HepG2 (cell line): ENCODE measurements at regions of chr4 and their contacts with region 1.

Region 1: DNA sequence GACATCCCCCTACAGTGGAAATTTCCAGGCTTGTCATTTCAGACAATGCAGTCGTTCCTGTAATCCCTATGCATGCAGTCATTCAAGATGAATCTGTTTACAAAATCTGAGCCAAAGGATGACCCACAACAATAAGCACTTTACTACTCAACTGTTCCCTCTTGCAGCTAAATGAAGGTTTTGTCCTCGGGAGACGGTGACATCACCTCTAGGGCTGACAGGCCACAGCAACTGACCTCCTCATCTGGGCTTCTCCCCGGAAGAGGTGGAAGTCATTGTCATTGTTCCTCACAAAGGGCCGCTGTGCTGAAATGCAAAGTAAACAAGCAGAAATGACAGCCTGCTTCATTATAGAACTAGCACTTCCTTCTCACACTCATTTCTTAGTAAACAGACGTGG is 29.2 kb downstream of the CLRN2 start:
- DNase-seq: peak; percentile 98
- ATAC-seq: peak; percentile 97
- H3K4me3 ChIP-seq: no peak overlapping the region
- H3K27ac ChIP-seq: peak overlapping the region; percentile 78
- H3K4me1 ChIP-seq: peaks cover 51% of the 10 kb centered on the region
- H3K27me3 ChIP-seq: no peaks in the 10 kb centered on the region
- CTCF ChIP-seq: no peak
- EP300 ChIP-seq: peak in 1 of 2 experiments; percentile 93; a peak in 2 of 4 replicates
- POLR2A ChIP-seq: no peak
- RAD21 ChIP-seq: no peak

Region 2: GRCh38 chr4:17511950-17512795 is 32.0 kb before region 1 on chr4 and contains the start of gene QDPR:
- CTCF ChIA-PET with region 1: no interaction called
- POLR2A ChIA-PET with region 1: interaction called, 9 read pairs
- in situ Hi-C with region 1: no loop called
- intact Hi-C with region 1: loop called (anchors 2 kb)
- DNase-seq: peak; percentile 67
- ATAC-seq: peak; percentile 91
- H3K4me3 ChIP-seq: peak within 1 kb of the TSS; percentile 65 to 88 (median 84)
- H3K27ac ChIP-seq: peak within 1 kb of the TSS; percentile 73
- H3K4me1 ChIP-seq: peaks cover 71% of the 10 kb centered on the region
- H3K27me3 ChIP-seq: no peaks in the 10 kb centered on the region; a peak in 1 of 5 replicates
- CTCF ChIP-seq: peak; percentile 76
- EP300 ChIP-seq: peak in 1 of 2 experiments; percentile 37; a peak in 1 of 4 replicates
- POLR2A ChIP-seq: peak; percentile 24 to 73; a peak in 2 of 4 replicates
- RAD21 ChIP-seq: peak; percentile 60
- total RNA-seq, gene QDPR: 9.9 and 32.4 TPM in 2 replicates

Region 3: GRCh38 chr4:17562160-17562559 is 18.0 kb after region 1 on chr4:
- CTCF ChIA-PET with region 1: no interaction called
- POLR2A ChIA-PET with region 1: interaction called, 19 read pairs
- in situ Hi-C with region 1: no loop called
- intact Hi-C with region 1: loop called (anchors 1 kb)
- DNase-seq: peak; percentile 46
- ATAC-seq: peak; percentile 16
- H3K4me3 ChIP-seq: no peak overlapping the region
- H3K27ac ChIP-seq: no peak overlapping the region
- H3K4me1 ChIP-seq: peaks cover 61% of the 10 kb centered on the region
- H3K27me3 ChIP-seq: no peaks in the 10 kb centered on the region
- CTCF ChIP-seq: peak; percentile 46
- EP300 ChIP-seq: no peak
- POLR2A ChIP-seq: no peak
- RAD21 ChIP-seq: peak; percentile 59

Region 4: GRCh38 chr4:17587094-17587822 is 43.1 kb after region 1 on chr4:
- CTCF ChIA-PET with region 1: no interaction called
- POLR2A ChIA-PET with region 1: no interaction called
- in situ Hi-C with region 1: no loop called
- intact Hi-C with region 1: loop called (anchors 2 kb)
- DNase-seq: peak; percentile 34
- ATAC-seq: peak; percentile 91
- H3K4me3 ChIP-seq: no peak overlapping the region
- H3K27ac ChIP-seq: peak overlapping the region; percentile 68
- H3K4me1 ChIP-seq: peaks cover 55% of the 10 kb centered on the region
- H3K27me3 ChIP-seq: no peaks in the 10 kb centered on the region
- CTCF ChIP-seq: no peak
- EP300 ChIP-seq: no peak
- POLR2A ChIP-seq: no peak
- RAD21 ChIP-seq: no peak

Region 5: DNA sequence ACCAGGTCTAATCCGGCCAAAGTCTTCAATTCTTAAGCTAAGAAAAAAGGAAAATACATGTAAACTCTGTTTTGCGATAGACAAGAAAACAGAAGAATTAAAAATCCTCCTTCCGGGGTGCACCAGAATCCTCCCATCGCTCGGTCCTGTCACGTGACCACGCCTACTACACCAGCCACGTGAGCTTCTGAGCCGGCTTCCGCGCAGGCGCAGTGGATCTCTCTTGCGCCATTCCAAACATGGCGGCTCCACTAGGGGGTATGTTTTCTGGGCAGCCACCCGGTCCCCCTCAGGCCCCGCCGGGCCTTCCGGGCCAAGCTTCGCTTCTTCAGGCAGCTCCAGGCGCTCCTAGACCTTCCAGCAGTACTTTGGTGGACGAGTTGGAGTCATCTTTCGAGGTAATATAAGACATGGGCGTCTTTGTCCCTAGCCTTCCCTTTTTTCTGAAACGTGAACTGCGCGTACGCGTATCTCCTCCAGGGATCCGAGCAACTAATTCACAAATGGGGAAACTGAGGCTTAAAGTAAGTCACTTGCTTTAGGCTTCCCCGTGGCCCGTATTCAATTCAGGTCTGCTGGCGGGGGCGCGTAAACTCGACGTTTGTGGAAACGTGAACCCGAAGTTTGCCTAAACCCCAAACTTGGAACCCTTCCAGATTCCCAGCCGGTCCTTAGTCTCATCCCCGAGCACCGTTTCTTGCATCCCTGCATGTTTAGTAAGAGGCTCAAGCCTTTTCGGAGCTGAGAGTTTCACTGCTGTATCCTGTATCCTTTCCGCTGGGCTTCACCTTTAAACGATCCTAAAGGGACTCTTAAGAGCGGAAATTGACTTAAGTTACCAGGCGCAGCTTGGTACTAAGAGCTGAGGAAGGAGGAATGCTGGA is 70.5 kb after region 1 on chr4 and contains the start of gene MED28:
- CTCF ChIA-PET with region 1: no interaction called
- POLR2A ChIA-PET with region 1: interaction called, 3 read pairs
- in situ Hi-C with region 1: no loop called
- intact Hi-C with region 1: loop called (anchors 1 kb)
- DNase-seq: peak; percentile 93
- ATAC-seq: peak; percentile 84
- H3K4me3 ChIP-seq: peak within 1 kb of the TSS; percentile 92 to 98 (median 93)
- H3K27ac ChIP-seq: peak within 1 kb of the TSS; percentile 82
- H3K4me1 ChIP-seq: peaks cover 39% of the 10 kb centered on the region
- H3K27me3 ChIP-seq: no peaks in the 10 kb centered on the region; a peak in 1 of 5 replicates
- CTCF ChIP-seq: peak; percentile 25
- EP300 ChIP-seq: no peak
- POLR2A ChIP-seq: peak; percentile 80 to 84; a peak in 3 of 4 replicates
- RAD21 ChIP-seq: no peak
- total RNA-seq, gene MED28: 65.7 and 96.5 TPM in 2 replicates

Region 6: GRCh38 chr4:17664755-17665154 is 120.5 kb after region 1 on chr4:
- CTCF ChIA-PET with region 1: no interaction called
- POLR2A ChIA-PET with region 1: no interaction called
- in situ Hi-C with region 1: no loop called
- intact Hi-C with region 1: no loop called
- DNase-seq: no peak
- ATAC-seq: peak; percentile 60; the same call in 2 of the 3 replicates
- H3K4me3 ChIP-seq: no peak overlapping the region
- H3K27ac ChIP-seq: no peak overlapping the region
- H3K4me1 ChIP-seq: peaks cover 17% of the 10 kb centered on the region
- H3K27me3 ChIP-seq: peaks cover 0 to 2% of the 10 kb centered on the region in 2 experiments; a peak in 2 of 5 replicates
- CTCF ChIP-seq: peak; percentile 9; the same call in 1 of the 2 replicates
- EP300 ChIP-seq: no peak
- POLR2A ChIP-seq: no peak
- RAD21 ChIP-seq: no peak

Region 7: GRCh38 chr4:17810260-17811077 is 266.3 kb after region 1 on chr4 and contains the starts of genes DCAF16 and NCAPG:
- CTCF ChIA-PET with region 1: interaction called, 5 read pairs
- POLR2A ChIA-PET with region 1: no interaction called
- in situ Hi-C with region 1: no loop called
- intact Hi-C with region 1: loop called (anchors 2 kb)
- DNase-seq: peak; percentile 98
- ATAC-seq: peak; percentile 96
- H3K4me3 ChIP-seq: peak within 1 kb of the TSS; percentile 87 to 93 (median 90)
- H3K27ac ChIP-seq: peak within 1 kb of the TSS; percentile 97
- H3K4me1 ChIP-seq: peaks cover 47% of the 10 kb centered on the region
- H3K27me3 ChIP-seq: no peaks in the 10 kb centered on the region; a peak in 1 of 5 replicates
- CTCF ChIP-seq: peak; percentile 6; the same call in 1 of the 2 replicates
- EP300 ChIP-seq: 0 out of 4 replicates have a peak, but pooled peaks of 1 of the 2 experiments have one; percentile 7
- POLR2A ChIP-seq: peak; percentile 95 to 97
- RAD21 ChIP-seq: peak; percentile 52
- total RNA-seq, gene DCAF16: 41.9 and 46.1 TPM in 2 replicates
- total RNA-seq, gene NCAPG: 61.9 and 108 TPM in 2 replicates